ENCODE measurements at regions of chr19 and their contacts with region 1.

Region 1: GRCh38 chr19:1241417-1242095 is at the start of gene ATP5F1D:
- DNase-seq: peak; percentile 78 to 97 (median 92)
- ATAC-seq: peak; percentile 60
- H3K4me3 ChIP-seq: peak within 1 kb of the TSS; percentile 48 to 71
- H3K4me3 Mint-ChIP-seq: peak within 1 kb of the TSS; percentile 88
- H3K27ac ChIP-seq: peak within 1 kb of the TSS; percentile 12 to 25
- H3K27ac Mint-ChIP-seq: peak within 1 kb of the TSS; percentile 90
- H3K4me1 ChIP-seq: peaks cover 58% of the 10 kb centered on the region
- H3K4me1 Mint-ChIP-seq: peaks cover 42% of the 10 kb centered on the region
- H3K27me3 ChIP-seq: peaks cover 0 to 11% of the 10 kb centered on the region in 2 experiments
- H3K27me3 Mint-ChIP-seq: peaks cover 6% of the 10 kb centered on the region
- CTCF ChIP-seq: no peak
- total RNA-seq, gene ATP5F1D: 86.2 to 96.3 TPM

Region 2: GRCh38 chr19:984165-984967 is 257.2 kb before region 1 on chr19 and contains the start of gene WDR18:
- CTCF ChIA-PET with region 1: interaction called, 6 read pairs
- POLR2A ChIA-PET with region 1: no interaction called
- intact Hi-C with region 1: loop called (anchors 1 kb)
- DNase-seq: peak; percentile 68 to 94 (median 90)
- ATAC-seq: peak; percentile 85
- H3K4me3 ChIP-seq: peak within 1 kb of the TSS; percentile 92 to 93
- H3K4me3 Mint-ChIP-seq: peak within 1 kb of the TSS; percentile 91
- H3K27ac ChIP-seq: peak within 1 kb of the TSS; percentile 78 to 87
- H3K27ac Mint-ChIP-seq: peak within 1 kb of the TSS; percentile 86
- H3K4me1 ChIP-seq: peaks cover 19% of the 10 kb centered on the region
- H3K4me1 Mint-ChIP-seq: peaks cover 12% of the 10 kb centered on the region
- H3K27me3 ChIP-seq: no peaks in the 10 kb centered on the region
- H3K27me3 Mint-ChIP-seq: no peaks in the 10 kb centered on the region
- CTCF ChIP-seq: no peak
- total RNA-seq, gene WDR18: 20.6 to 22.7 TPM

Region 3: GRCh38 chr19:1103708-1104310 is 137.7 kb before region 1 on chr19 and contains the start of gene GPX4:
- CTCF ChIA-PET with region 1: interaction called, 6 read pairs
- POLR2A ChIA-PET with region 1: interaction called, 3 read pairs
- intact Hi-C with region 1: loop called (anchors 2 kb)
- DNase-seq: peak; percentile 96 to 100 (median 98)
- ATAC-seq: peak; percentile 88
- H3K4me3 ChIP-seq: peak within 1 kb of the TSS; percentile 73 to 93
- H3K4me3 Mint-ChIP-seq: peak within 1 kb of the TSS; percentile 76
- H3K27ac ChIP-seq: peak within 1 kb of the TSS; percentile 86
- H3K27ac Mint-ChIP-seq: peak within 1 kb of the TSS; percentile 92
- H3K4me1 ChIP-seq: peaks cover 46% of the 10 kb centered on the region
- H3K4me1 Mint-ChIP-seq: peaks cover 27% of the 10 kb centered on the region
- H3K27me3 ChIP-seq: no peaks in the 10 kb centered on the region
- H3K27me3 Mint-ChIP-seq: no peaks in the 10 kb centered on the region
- CTCF ChIP-seq: no peak
- total RNA-seq, gene GPX4: 172 to 174 TPM

Region 4: GRCh38 chr19:1173845-1174809 is 67.4 kb before region 1 on chr19 and contains the start of gene SBNO2:
- CTCF ChIA-PET with region 1: no interaction called
- POLR2A ChIA-PET with region 1: no interaction called
- intact Hi-C with region 1: loop called in 1 of 2 experiments (anchors 2 kb)
- DNase-seq: peak; percentile 82 to 95 (median 89)
- ATAC-seq: peak; percentile 92
- H3K4me3 ChIP-seq: peak within 1 kb of the TSS; percentile 64 to 77
- H3K4me3 Mint-ChIP-seq: peak within 1 kb of the TSS; percentile 89
- H3K27ac ChIP-seq: peak within 1 kb of the TSS; percentile 70 to 73
- H3K27ac Mint-ChIP-seq: peak within 1 kb of the TSS; percentile 94
- H3K4me1 ChIP-seq: peaks cover 23% of the 10 kb centered on the region
- H3K4me1 Mint-ChIP-seq: peaks cover 26% of the 10 kb centered on the region
- H3K27me3 ChIP-seq: no peaks in the 10 kb centered on the region
- H3K27me3 Mint-ChIP-seq: no peaks in the 10 kb centered on the region
- CTCF ChIP-seq: no peak
- total RNA-seq, gene SBNO2: 123 to 134 TPM

Region 5: DNA sequence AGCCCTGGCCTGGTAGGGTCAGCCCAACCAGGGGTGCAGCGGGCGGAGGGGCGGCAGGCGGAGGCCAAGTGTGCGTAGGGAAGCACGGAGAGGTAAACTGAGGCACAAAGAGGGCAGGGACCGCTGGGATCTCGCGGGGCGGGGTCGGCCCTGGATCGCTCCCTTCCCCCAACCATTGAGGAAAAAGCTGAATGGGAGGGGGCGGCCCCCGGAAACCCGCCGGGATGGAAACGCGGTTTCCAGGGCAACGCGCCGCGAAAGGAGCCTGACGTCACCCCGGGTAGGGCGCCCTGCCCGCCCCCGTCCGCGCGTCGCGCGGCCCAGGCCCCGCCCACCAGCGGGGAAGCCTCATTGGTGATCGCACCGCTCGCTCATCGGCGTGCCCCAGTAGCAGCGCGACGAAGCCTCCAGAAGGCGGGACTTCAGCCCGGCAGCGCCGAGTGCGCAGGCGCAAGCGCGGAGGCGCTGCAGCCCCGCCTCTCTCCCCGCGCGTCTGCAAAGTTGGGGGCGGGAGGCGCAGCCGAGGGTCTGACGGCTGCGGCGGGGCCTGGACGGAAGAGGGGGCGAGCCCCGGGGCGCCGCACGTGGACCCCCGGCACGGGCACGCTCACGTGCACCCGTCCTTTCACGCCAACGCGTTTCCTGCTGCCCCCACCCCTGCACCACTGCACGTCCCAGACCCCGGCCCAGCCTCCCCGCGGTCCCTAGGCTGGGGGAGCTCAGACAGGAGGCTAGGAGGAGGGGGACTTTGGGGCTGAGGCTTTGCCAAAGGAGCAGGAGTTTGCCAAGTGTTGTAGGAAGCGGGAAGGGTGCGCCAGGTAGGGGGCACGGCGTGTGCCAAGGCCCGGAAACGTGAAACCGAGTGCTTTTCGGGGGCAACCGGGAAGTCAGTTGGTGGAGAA is 19.3 kb after region 1 on chr19:
- CTCF ChIA-PET with region 1: interaction called, 498 read pairs
- POLR2A ChIA-PET with region 1: interaction called, 271 read pairs
- intact Hi-C with region 1: loop called in 1 of 2 experiments (anchors 1 kb)
- DNase-seq: peak; percentile 94 to 99 (median 97)
- ATAC-seq: peak; percentile 77
- H3K4me3 ChIP-seq: peak overlapping the region; percentile 83 to 98
- H3K4me3 Mint-ChIP-seq: peak overlapping the region; percentile 90
- H3K27ac ChIP-seq: peak overlapping the region; percentile 99 to 100
- H3K27ac Mint-ChIP-seq: peak overlapping the region; percentile 96
- H3K4me1 ChIP-seq: peaks cover 70% of the 10 kb centered on the region
- H3K4me1 Mint-ChIP-seq: peaks cover 57% of the 10 kb centered on the region
- H3K27me3 ChIP-seq: no peaks in the 10 kb centered on the region
- H3K27me3 Mint-ChIP-seq: no peaks in the 10 kb centered on the region
- CTCF ChIP-seq: no peak

Region 6: DNA sequence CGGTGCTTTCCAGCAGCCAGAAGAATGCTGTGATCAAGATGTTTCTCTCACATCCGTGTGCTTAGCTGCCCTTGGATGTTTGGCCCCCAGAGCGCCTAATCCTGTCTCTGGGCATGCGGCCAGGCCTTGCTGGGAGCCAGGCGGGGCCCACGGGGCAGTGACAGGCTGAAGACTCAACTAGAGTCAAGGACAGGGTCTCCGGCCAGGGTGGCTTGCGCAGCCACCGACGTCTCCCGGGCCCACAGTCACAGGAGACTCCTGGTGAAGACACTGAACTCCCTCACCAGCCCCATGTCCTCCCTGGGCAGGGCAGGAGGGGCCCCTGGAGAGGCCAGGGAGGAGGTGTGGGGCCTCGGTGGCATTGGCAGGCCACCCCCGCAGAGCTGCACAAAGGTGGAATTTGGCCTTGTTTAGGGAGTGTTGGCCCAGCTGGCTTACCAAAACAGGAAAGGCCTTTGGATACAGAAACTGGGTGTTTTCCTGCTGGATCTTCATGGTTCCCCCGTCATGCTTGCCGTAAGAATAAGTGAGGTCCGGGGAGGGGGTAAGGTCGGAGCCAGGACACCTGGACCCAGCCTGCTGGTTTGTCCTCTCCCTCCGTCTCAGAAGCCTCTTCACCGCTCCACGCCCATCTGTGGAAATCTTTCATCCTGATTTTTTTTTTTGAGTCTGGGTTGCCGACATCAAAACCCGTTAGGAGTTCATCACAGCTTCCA is 132.1 kb after region 1 on chr19:
- CTCF ChIA-PET with region 1: interaction called, 21 read pairs
- POLR2A ChIA-PET with region 1: interaction called, 7 read pairs
- intact Hi-C with region 1: loop called in 1 of 2 experiments (anchors 1 kb)
- DNase-seq: peak in 1 of 9 experiments; percentile 15
- ATAC-seq: no peak
- H3K4me3 ChIP-seq: no peak overlapping the region
- H3K4me3 Mint-ChIP-seq: no peak overlapping the region
- H3K27ac ChIP-seq: no peak overlapping the region
- H3K27ac Mint-ChIP-seq: no peak overlapping the region
- H3K4me1 ChIP-seq: no peaks in the 10 kb centered on the region
- H3K4me1 Mint-ChIP-seq: no peaks in the 10 kb centered on the region
- H3K27me3 ChIP-seq: no peaks in the 10 kb centered on the region
- H3K27me3 Mint-ChIP-seq: no peaks in the 10 kb centered on the region
- CTCF ChIP-seq: no peak